Common myeloid progenitor, CD34-positive (primary cell): ENCODE measurements at regions of chr20 and their contacts with region 1.

Region 1: DNA sequence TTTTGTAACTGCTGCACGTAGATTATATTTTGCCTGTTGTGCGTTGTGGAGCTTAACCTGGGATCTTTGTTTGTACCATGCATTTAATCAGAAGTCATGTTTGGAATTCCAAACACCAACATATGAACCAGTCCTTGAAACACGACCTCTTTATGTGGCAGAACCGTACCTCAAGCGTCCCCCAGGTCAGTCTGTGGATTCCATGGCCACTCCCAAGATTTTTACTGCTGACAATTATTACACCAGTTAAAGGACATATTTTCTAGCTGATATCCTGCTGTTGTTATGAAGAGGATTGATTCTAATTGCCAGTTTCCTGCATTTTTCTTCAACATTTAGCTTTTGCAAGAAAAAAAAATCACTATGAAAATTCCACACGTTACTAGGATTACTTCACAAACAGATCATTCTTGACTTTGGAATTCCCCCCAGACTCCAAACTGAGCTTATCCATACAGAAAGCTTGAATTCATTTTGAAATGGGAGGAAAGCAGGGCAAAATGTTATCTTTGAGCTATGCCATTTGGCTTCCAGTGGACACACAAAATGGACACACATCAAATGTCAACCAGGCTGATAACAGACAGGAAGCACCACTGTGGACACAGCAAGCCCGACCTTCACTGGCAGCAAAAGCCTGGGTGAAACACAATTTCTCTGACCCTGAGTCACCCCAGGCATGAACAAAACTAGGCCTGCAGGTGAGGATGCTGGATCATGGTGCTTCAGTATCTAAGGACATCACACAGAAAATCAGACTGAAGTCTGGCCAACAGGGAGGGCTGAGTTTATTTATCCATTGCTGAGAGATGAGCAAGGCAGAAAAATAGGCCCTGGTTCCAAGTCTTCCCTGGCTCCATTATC is 542.9 kb upstream of the JAG1 start:
- DNase-seq: no peak
- H3K4me3 ChIP-seq: no peak overlapping the region
- H3K27ac ChIP-seq: no peak overlapping the region
- H3K4me1 ChIP-seq: peaks cover 6 to 44% (median 17%) of the 10 kb centered on the region in 4 experiments
- H3K27me3 ChIP-seq: no peaks in the 10 kb centered on the region

Region 2: GRCh38 chr20:11193241-11193640 is 23.4 kb before region 1 on chr20:
- CTCF ChIA-PET with region 1: no interaction called
- POLR2A ChIA-PET with region 1: no interaction called
- DNase-seq: no peak
- H3K4me3 ChIP-seq: no peak overlapping the region
- H3K27ac ChIP-seq: no peak overlapping the region
- H3K4me1 ChIP-seq: peaks cover 0 to 16% (median 0%) of the 10 kb centered on the region in 4 experiments
- H3K27me3 ChIP-seq: no peaks in the 10 kb centered on the region

Region 3: GRCh38 chr20:11204926-11205768 is 11.5 kb before region 1 on chr20:
- CTCF ChIA-PET with region 1: interaction called, 12 read pairs
- POLR2A ChIA-PET with region 1: interaction called, 3 read pairs
- DNase-seq: peak; percentile 72 to 83 (median 79)
- H3K4me3 ChIP-seq: no peak overlapping the region
- H3K27ac ChIP-seq: no peak overlapping the region
- H3K4me1 ChIP-seq: peaks cover 0 to 10% (median 0%) of the 10 kb centered on the region in 4 experiments
- H3K27me3 ChIP-seq: no peaks in the 10 kb centered on the region

Region 4: DNA sequence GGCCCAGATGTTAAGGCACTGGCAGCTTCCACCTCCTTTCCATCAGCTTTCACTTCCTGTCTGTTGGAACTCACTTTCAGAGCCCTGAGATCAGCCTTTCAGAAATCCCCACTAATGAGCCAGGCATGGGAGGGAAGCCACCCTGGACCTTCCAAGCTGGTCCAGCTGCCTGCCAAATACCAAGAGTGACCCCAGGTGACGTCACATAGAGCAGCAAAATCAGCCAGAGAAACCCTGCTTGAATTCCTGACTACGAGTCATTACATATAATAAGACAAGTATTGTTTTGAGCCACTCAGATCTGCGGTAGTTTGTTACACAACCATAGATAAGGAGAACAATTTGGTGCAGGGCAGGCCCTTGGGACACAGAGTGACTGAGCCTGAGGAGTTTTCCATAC is 13.1 kb after region 1 on chr20:
- CTCF ChIA-PET with region 1: no interaction called
- POLR2A ChIA-PET with region 1: no interaction called
- DNase-seq: no peak
- H3K4me3 ChIP-seq: no peak overlapping the region
- H3K27ac ChIP-seq: no peak overlapping the region
- H3K4me1 ChIP-seq: no peaks in the 10 kb centered on the region
- H3K27me3 ChIP-seq: no peaks in the 10 kb centered on the region